ENCODE measurements at regions of chr3 and their contacts with region 1.

Region 1: DNA sequence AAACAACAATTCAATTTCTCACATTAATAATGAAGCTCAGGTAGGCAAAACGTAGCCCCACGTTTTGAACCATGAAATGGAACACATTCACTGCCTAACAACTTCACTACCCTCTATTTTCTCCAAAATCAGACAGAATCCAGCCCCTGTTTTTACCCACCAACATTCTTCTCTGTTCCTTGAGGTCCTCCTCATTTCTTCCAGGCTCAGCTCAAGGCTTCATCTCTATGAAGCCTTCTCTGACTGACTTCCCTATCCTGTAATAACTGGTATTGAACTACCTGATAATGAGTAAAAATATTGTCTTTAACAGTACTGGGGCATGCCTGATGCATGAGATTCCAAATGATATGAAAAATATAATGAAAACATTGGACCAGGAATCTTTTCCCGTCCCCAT is 2.2 kb downstream of the TFRC start:
- DNase-seq: no peak
- CTCF ChIP-seq: no peak

Region 2: DNA sequence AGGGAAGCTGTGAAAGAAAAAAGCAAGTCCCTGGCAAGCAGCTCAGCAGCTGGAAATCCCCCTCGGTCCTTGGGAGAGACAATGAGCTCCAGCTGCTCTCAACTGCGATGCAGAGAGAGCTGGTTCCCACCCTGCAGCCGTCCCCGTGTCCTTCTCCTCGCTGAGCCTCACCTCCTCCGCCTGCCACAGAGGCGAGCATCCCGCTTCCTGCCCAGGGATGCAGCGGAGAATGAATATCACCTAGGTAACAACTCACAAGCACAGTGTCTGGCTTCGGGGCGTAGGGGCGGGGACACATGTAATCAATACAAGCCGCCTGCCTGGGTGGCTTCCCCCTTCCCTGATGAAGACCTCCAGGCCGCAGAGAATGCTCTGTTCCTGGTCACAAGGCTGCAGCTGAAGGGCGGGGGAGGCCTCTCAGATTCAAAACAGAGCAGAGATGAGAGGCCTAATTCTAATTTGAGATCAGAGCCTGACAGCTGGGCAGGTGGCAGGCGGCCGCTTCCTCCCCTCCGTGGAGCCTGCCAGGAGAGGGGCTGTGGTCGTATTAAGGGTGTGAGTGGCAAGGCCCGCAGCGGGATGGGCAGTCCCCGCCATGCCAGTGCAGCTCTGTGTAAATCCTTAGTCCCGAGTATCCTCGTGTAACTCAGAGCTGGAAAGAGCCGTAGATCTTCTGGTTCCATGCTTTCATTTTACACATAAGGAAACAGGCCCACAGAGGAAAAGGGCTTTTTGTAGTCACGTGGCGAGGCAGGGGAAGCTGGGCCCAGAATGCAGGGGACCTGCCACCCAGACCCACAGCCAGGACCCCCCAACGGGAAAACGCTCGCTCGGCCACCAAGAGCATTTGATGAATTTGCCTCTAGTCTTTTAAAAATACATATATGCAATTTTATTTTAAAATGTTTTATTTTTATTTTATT is 107.2 kb after region 1 on chr3:
- in situ Hi-C with region 1: loop called (anchors 5 kb)
- DNase-seq: peak; percentile 74
- CTCF ChIP-seq: no peak

Region 3: DNA sequence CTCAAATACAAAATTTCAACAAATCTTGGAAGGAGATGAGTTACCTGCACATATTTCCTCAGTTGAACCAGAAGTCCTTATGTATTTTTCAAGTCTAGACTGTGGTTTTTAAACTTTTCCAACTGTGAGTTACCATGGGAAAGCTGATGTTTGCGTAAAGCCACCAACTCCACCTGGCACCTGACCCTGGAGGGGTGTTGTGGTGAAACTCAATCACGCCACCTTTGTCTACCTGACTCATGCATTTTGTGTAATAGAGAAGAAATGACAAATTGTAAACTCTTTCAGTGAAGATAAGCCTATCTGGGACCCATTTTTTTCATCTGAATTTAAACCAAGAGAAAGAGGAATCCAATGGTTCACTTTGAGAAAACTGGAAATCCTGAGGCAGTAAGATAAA is 403.5 kb after region 1 on chr3:
- in situ Hi-C with region 1: no loop called
- DNase-seq: no peak
- CTCF ChIP-seq: no peak

Measured in GM13976 (cell line).